GM12878 (cell line): ENCODE measurements at regions of chr19 and their contacts with region 1.

Region 1: GRCh38 chr19:48660854-48661731 is 11.7 kb downstream of the NTN5 start:
- DNase-seq: peak; percentile 83
- ATAC-seq: peak; percentile 97
- H3K4me3 ChIP-seq: peak overlapping the region; percentile 1; the same call in 1 of the 2 replicates
- H3K27ac ChIP-seq: peak overlapping the region; percentile 96
- H3K4me1 ChIP-seq: peaks cover 9% of the 10 kb centered on the region
- H3K27me3 ChIP-seq: no peaks in the 10 kb centered on the region
- CTCF ChIP-seq: no peak
- EP300 ChIP-seq: no peak
- POLR2A ChIP-seq: peak; percentile 22; the same call in 1 of the 2 replicates
- RAD21 ChIP-seq: no peak

Region 2: DNA sequence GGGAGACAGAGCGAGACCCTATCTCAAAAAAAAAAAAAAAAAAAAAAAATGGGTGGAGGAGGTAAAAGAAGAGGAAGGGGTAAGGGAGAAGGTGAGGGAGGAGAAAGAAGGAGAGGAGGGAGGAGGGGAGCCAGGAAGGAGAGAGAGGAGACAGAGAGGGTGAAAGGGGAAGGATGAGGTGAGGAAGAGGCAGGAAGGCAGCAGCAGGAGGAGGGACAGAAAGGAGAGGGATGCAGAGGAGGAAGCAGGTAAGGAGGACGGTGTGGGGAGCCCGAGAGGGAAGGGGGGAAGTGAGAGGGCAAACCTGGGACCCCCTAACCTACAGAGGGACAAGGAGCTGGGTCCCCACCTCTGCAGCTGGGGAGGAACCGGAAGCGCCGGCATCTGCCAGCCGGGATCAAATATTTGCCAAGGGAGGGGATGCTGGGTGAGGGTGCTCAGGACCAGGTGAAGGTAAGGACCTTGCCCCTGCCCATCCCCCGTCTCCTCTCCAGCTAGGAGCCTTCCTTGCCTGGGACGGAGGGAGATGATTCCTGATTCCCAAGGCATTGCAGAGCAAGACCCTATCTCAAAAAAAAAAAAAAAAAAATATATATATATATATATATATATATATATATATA is 58.9 kb before region 1 on chr19:
- CTCF ChIA-PET with region 1: no interaction called
- POLR2A ChIA-PET with region 1: no interaction called
- RAD21 ChIA-PET with region 1: no interaction called
- SMC1A ChIA-PET with region 1: no interaction called
- in situ Hi-C with region 1: no loop called
- intact Hi-C with region 1: no loop called
- DNase-seq: no peak
- ATAC-seq: no peak
- H3K4me3 ChIP-seq: no peak overlapping the region
- H3K27ac ChIP-seq: no peak overlapping the region
- H3K4me1 ChIP-seq: no peaks in the 10 kb centered on the region
- H3K27me3 ChIP-seq: no peaks in the 10 kb centered on the region
- CTCF ChIP-seq: no peak
- EP300 ChIP-seq: no peak
- POLR2A ChIP-seq: no peak
- RAD21 ChIP-seq: no peak

Region 3: DNA sequence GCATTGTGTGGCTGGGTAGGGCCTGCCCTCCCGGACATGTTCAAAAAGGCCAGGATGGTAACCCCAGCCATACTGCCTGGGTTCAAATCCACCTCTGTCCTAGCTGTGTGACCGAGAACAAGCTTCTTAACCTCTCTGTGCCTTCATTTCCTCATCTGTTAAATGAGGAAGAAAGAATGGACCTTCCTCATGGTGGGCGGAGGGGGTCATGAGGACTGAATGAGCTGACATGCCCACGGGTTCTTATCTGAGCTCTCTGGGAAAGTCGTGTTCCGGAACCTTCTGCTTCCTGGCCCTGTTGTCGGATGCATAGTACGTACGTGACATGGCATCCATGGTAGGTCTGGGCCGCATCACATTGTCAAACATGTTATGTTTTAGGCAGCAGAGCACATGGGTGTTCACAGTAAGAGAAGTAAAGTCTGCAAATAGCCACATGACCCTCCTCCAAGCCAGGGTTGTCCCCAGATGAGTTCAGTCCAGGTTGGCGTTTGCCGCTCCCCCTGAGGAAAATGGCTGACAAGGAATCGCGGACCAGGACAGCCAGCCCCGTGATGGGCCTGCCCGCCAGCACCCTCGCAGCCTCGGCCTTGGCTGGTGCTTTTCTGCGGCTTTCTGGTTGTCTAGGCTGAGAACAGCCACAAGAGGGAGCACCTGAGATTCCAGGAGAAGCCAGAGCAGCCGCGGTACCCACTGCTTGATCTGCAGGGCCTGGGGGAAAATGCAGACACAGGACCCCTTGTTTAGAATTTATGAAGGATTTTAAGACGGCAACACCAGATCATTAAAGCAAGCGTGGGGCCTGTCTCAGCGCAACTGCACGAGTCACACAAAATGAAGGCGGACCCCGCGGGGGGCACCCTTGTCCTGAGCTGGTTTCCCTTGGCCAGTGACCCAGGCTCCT is 14.1 kb after region 1 on chr19:
- CTCF ChIA-PET with region 1: interaction called, 20 read pairs
- POLR2A ChIA-PET with region 1: interaction called, 3 read pairs
- RAD21 ChIA-PET with region 1: interaction called, 3 read pairs
- SMC1A ChIA-PET with region 1: interaction called, 4 read pairs
- in situ Hi-C with region 1: no loop called
- intact Hi-C with region 1: no loop called
- DNase-seq: no peak
- ATAC-seq: peak; percentile 95
- H3K4me3 ChIP-seq: no peak overlapping the region
- H3K27ac ChIP-seq: no peak overlapping the region
- H3K4me1 ChIP-seq: no peaks in the 10 kb centered on the region
- H3K27me3 ChIP-seq: peaks cover 0 to 2% of the 10 kb centered on the region in 2 experiments; a peak in 2 of 4 replicates
- CTCF ChIP-seq: peak; percentile 81 to 89 (median 85)
- EP300 ChIP-seq: no peak
- POLR2A ChIP-seq: no peak
- RAD21 ChIP-seq: peak; percentile 64

Region 4: GRCh38 chr19:48780631-48781391 is 119.7 kb after region 1 on chr19:
- CTCF ChIA-PET with region 1: no interaction called
- POLR2A ChIA-PET with region 1: no interaction called
- RAD21 ChIA-PET with region 1: no interaction called
- SMC1A ChIA-PET with region 1: no interaction called
- in situ Hi-C with region 1: no loop called
- intact Hi-C with region 1: loop called (anchors 5 kb)
- DNase-seq: peak; percentile 54
- ATAC-seq: peak; percentile 71
- H3K4me3 ChIP-seq: no peak overlapping the region
- H3K27ac ChIP-seq: no peak overlapping the region
- H3K4me1 ChIP-seq: peaks cover 3% of the 10 kb centered on the region; the same call in 1 of the 2 replicates
- H3K27me3 ChIP-seq: no peaks in the 10 kb centered on the region
- CTCF ChIP-seq: no peak
- EP300 ChIP-seq: no peak
- POLR2A ChIP-seq: no peak
- RAD21 ChIP-seq: no peak